WTC11 (cell line): ENCODE measurements at regions of chr6 and their contacts with region 1.

Region 1: GRCh38 chr6:6547110-6547879 is 41.2 kb upstream of the LY86 start:
- DNase-seq: peak; percentile 94
- ATAC-seq: peak; percentile 90
- H3K4me3 Mint-ChIP-seq: peak overlapping the region; percentile 75
- H3K27ac Mint-ChIP-seq: peak overlapping the region; percentile 67
- H3K4me1 Mint-ChIP-seq: peaks cover 19% of the 10 kb centered on the region
- H3K27me3 Mint-ChIP-seq: peaks cover 28% of the 10 kb centered on the region
- CTCF ChIP-seq: peak; percentile 96

Region 2: GRCh38 chr6:5995949-5996713 is 551.2 kb before region 1 on chr6:
- CTCF ChIA-PET with region 1: interaction called, 10 read pairs
- POLR2A ChIA-PET with region 1: no interaction called
- DNase-seq: peak; percentile 89
- ATAC-seq: peak; percentile 82
- H3K4me3 Mint-ChIP-seq: peak overlapping the region; percentile 82
- H3K27ac Mint-ChIP-seq: no peak overlapping the region; the same call in 1 of the 2 replicates
- H3K4me1 Mint-ChIP-seq: peaks cover 73% of the 10 kb centered on the region
- H3K27me3 Mint-ChIP-seq: peaks cover 100% of the 10 kb centered on the region
- CTCF ChIP-seq: 0 out of 2 replicates have a peak, but pooled peaks have one; percentile 22

Region 3: DNA sequence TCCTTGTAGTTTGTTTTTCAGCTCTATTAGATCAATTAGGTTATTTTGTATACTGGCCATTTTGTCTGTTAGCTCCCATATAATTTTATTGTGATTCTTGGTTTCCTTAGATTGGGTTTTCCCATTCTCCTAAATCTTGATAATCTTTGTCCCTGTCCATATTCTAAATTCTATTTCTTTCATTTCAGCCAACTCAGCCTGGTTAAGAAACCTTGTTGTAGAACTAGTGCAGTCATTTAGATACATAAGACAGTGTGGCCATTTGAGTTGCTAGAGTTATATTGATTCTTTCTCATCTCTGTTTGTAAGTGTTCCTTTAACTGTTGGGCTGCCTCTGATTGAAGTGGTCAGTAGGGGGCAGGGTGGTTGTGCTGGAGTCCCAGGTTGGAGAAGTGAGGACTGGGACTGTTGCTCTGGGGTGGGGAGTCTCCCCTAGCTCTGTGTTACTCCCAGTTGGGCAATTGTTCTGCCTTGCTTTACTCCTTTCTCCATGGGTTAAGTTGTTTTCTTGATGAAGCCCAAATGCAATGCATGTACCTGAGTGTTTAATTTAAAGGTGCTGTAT is 441.7 kb before region 1 on chr6:
- CTCF ChIA-PET with region 1: interaction called, 11 read pairs
- POLR2A ChIA-PET with region 1: no interaction called
- DNase-seq: peak; percentile 57
- ATAC-seq: peak; percentile 95
- H3K4me3 Mint-ChIP-seq: no peak overlapping the region
- H3K27ac Mint-ChIP-seq: no peak overlapping the region
- H3K4me1 Mint-ChIP-seq: no peaks in the 10 kb centered on the region
- H3K27me3 Mint-ChIP-seq: peaks cover 14% of the 10 kb centered on the region
- CTCF ChIP-seq: no peak

Region 4: GRCh38 chr6:6319952-6320811 is 227.1 kb before region 1 on chr6 and contains the start of gene F13A1:
- CTCF ChIA-PET with region 1: interaction called, 17 read pairs
- POLR2A ChIA-PET with region 1: no interaction called
- DNase-seq: peak; percentile 57
- ATAC-seq: peak; percentile 73
- H3K4me3 Mint-ChIP-seq: peak within 1 kb of the TSS; percentile 73
- H3K27ac Mint-ChIP-seq: no peak within 1 kb of the TSS
- H3K4me1 Mint-ChIP-seq: peaks cover 35% of the 10 kb centered on the region
- H3K27me3 Mint-ChIP-seq: peaks cover 48% of the 10 kb centered on the region
- CTCF ChIP-seq: no peak
- total RNA-seq, gene F13A1: 1.0 to 1.3 TPM (median 1.1 TPM) in 3 replicates

Region 5: DNA sequence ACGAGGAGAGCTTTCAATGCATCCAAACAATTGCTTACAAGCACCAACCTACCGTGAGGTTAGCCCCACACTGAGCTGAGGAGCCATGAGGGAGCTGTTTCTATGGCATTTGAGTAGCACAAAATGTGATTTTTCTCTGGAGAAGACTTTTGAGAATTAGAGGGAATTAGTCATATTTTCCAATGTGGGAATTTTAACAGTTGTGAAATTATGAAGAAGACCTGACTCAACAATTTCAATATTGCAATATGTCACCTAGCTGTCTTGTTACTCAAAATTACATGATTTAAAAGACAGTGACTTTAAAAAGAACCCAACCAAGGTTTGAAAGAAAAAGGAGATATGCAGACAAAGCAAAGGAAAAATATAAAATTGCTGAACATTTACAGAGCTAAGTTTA is 21.4 kb before region 1 on chr6:
- CTCF ChIA-PET with region 1: interaction called, 19 read pairs
- POLR2A ChIA-PET with region 1: no interaction called
- DNase-seq: no peak
- ATAC-seq: no peak
- H3K4me3 Mint-ChIP-seq: no peak overlapping the region
- H3K27ac Mint-ChIP-seq: no peak overlapping the region
- H3K4me1 Mint-ChIP-seq: peaks cover 36% of the 10 kb centered on the region
- H3K27me3 Mint-ChIP-seq: peaks cover 3% of the 10 kb centered on the region; the same call in 1 of the 2 replicates
- CTCF ChIP-seq: no peak